Tibial artery (tissue), 4 donors: ENCODE measurements at regions of chr10 and their contacts with region 1.

Region 1: GRCh38 chr10:92517034-92517655 is 56.7 kb downstream of the IDE start:
- DNase-seq: peak in 1 of 2 donors; percentile 66
- H3K4me3 ChIP-seq: no peak overlapping the region
- H3K27ac ChIP-seq: no peak overlapping the region
- H3K4me1 ChIP-seq: no peaks in the 10 kb centered on the region
- H3K27me3 ChIP-seq: no peaks in the 10 kb centered on the region
- CTCF ChIP-seq: peak; percentile 76 to 81

Region 2: DNA sequence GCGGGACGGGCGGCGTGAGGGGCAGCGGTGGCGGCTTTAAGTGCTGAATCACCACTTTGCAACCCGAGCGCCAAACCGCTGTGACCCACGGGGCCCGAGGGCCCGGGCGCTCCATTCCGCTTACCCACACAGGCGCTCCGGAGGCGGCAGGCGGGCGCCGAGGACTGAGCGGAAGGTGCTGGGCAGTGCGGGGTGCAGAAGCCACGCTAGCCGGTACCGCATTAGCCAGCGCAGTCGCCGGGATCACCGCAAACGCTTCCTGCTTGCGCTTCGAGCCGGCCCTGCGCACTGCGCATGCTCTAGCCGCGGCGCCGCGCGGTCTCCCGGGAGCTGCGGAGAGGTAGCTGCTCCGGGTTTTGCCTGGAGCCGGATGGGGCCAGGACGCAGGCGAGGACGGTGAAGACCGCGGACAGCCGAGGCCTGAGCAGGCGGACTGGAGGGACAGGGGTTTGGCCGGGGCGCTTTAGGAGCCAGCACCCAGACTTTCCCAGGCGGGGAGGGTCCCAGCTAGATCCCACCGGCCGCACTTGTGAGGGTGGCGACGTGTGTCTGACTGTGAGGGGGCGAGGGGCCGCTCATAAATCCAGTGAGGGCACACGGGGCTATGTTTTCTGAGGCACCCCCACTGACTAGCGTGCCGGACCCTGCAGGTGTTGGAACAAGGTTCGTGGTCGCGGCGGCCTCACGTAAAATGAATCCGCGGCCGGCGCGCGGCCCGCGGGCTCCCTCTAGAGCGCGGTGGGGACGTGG is 56.8 kb after region 1 on chr10 and contains the start of gene IDE:
- intact Hi-C with region 1: loop called (anchors 2 kb)
- DNase-seq: peak; percentile 78 to 91
- H3K4me3 ChIP-seq: peak within 1 kb of the TSS; percentile 89 to 90
- H3K27ac ChIP-seq: peak within 1 kb of the TSS; percentile 89 to 94
- H3K4me1 ChIP-seq: peaks cover 0 to 33% (median 21%) of the 10 kb centered on the region in 4 donors
- H3K27me3 ChIP-seq: no peaks in the 10 kb centered on the region
- CTCF ChIP-seq: peak; percentile 72 to 83

Region 3: GRCh38 chr10:92880233-92880861 is 363.2 kb after region 1 on chr10:
- intact Hi-C with region 1: loop called (anchors 5 kb)
- DNase-seq: no peak
- H3K4me3 ChIP-seq: no peak overlapping the region
- H3K27ac ChIP-seq: no peak overlapping the region
- H3K4me1 ChIP-seq: no peaks in the 10 kb centered on the region
- H3K27me3 ChIP-seq: no peaks in the 10 kb centered on the region
- CTCF ChIP-seq: peak; percentile 35 to 39